AG04450 (cell line): ENCODE measurements at regions of chr2 and their contacts with region 1.

Region 1: GRCh38 chr2:30115141-30115980 is 31.4 kb upstream of the YPEL5 start:
- DNase-seq: peak; percentile 69
- H3K4me3 ChIP-seq: no peak overlapping the region
- H3K27ac ChIP-seq: peak overlapping the region; percentile 57
- H3K27me3 ChIP-seq: peaks cover 6% of the 10 kb centered on the region
- CTCF ChIP-seq: peak; percentile 99

Region 2: DNA sequence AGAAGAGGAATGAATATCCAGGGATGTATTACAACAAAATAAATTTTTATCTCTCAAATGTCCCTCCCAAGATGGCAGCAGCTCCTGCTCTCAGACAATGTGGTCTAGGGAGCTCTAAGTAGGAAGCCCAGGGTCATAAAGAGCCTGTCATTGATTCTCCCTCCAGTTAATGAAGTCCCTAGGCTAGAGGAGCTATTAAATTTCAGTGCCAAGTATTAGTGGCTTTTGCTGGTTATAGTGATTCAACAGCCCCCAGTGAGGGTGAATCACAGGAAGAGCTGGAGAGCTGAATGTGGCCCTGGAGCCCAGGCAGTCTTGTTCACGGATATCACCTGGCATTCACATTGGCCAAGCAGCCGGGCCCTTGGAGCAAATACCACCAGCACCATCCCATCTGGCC is 78.3 kb before region 1 on chr2:
- CTCF ChIA-PET with region 1: no interaction called
- POLR2A ChIA-PET with region 1: no interaction called
- DNase-seq: no peak
- H3K4me3 ChIP-seq: no peak overlapping the region
- H3K27ac ChIP-seq: no peak overlapping the region
- H3K27me3 ChIP-seq: peaks cover 9% of the 10 kb centered on the region
- CTCF ChIP-seq: no peak

Region 3: DNA sequence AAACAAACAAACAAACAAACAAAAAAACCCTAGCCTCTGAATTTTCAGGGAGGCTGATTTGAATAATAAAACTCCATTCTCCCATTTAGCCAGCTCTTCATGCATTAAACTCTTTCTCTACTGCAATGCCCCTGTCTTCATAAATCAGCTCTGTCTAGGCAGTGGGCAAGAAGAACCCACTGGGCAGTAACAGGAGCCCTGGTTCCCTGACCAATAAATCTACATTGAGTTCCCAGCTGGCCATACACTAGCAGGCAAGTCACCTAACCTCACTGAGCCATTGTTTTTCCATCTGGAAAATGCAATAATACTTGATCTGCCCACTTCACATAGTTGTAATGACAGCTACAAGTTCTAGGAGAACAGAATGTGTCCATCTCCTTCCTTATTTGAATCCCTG is 26.2 kb before region 1 on chr2:
- CTCF ChIA-PET with region 1: interaction called, 34 read pairs
- POLR2A ChIA-PET with region 1: no interaction called
- DNase-seq: no peak
- H3K4me3 ChIP-seq: no peak overlapping the region
- H3K27ac ChIP-seq: no peak overlapping the region
- H3K27me3 ChIP-seq: peaks cover 30% of the 10 kb centered on the region
- CTCF ChIP-seq: no peak

Region 4: DNA sequence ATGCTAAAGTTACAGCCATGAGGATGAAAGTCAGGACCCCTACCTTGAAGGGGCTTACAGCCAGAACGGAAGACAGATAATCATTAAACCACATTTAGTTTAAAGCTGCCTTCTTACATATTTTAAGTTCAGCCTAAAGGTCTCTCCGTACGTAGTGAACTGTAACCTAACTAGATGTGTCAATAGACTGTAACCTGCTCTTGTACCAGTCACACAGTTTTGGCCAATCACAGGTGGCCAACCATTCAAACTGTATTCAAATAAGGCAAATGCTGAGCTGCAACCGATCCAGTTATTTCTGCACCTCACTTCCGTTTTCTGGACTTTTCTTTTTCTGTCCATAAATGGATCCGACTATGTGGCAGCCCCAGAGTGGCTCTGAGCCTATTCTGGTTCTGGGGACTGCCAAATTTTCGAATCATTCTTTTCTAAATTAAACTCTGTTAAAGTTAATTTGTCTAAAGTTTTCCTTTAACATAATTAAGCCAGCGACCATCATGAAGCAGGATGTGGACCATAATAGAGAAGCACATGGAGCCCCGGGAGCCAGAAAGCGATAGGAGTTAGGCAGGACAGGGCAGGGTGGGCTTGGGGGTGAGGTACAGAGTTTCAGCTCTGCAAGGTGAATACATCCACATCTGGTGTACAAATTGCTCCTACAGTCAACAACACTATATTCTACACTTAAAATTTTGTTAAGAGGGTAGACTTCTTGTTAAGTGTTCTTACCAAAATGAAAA is 16.9 kb before region 1 on chr2:
- CTCF ChIA-PET with region 1: interaction called, 16 read pairs
- POLR2A ChIA-PET with region 1: no interaction called
- DNase-seq: no peak
- H3K4me3 ChIP-seq: no peak overlapping the region
- H3K27ac ChIP-seq: no peak overlapping the region
- H3K27me3 ChIP-seq: peaks cover 3% of the 10 kb centered on the region
- CTCF ChIP-seq: no peak

Region 5: GRCh38 chr2:30135541-30135940 is 20.2 kb after region 1 on chr2:
- CTCF ChIA-PET with region 1: interaction called, 13 read pairs
- POLR2A ChIA-PET with region 1: no interaction called
- DNase-seq: no peak
- H3K4me3 ChIP-seq: no peak overlapping the region
- H3K27ac ChIP-seq: no peak overlapping the region
- H3K27me3 ChIP-seq: peaks cover 19% of the 10 kb centered on the region
- CTCF ChIP-seq: no peak

Region 6: GRCh38 chr2:30146438-30147147 is 31.2 kb after region 1 on chr2 and contains the start of gene YPEL5:
- CTCF ChIA-PET with region 1: interaction called, 10 read pairs
- POLR2A ChIA-PET with region 1: interaction called, 9 read pairs
- DNase-seq: peak; percentile 99
- H3K4me3 ChIP-seq: peak within 1 kb of the TSS; percentile 74
- H3K27ac ChIP-seq: peak within 1 kb of the TSS; percentile 80
- H3K27me3 ChIP-seq: peaks cover 7% of the 10 kb centered on the region
- CTCF ChIP-seq: no peak
- polyA plus RNA-seq, gene YPEL5: 112 and 116 TPM in 2 replicates